IMR-90 (cell line): ENCODE measurements at regions of chr15 and their contacts with region 1.

Region 1: GRCh38 chr15:69523010-69524001 is 70.7 kb downstream of the RPLP1 start:
- DNase-seq: peak; percentile 72
- ATAC-seq: peak; percentile 98
- H3K4me3 ChIP-seq: no peak overlapping the region
- H3K27ac ChIP-seq: no peak overlapping the region
- H3K4me1 ChIP-seq: no peaks in the 10 kb centered on the region
- H3K27me3 ChIP-seq: peaks cover 25% of the 10 kb centered on the region
- CTCF ChIP-seq: peak; percentile 83
- POLR2A ChIP-seq: no peak
- RAD21 ChIP-seq: peak; percentile 90

Region 2: DNA sequence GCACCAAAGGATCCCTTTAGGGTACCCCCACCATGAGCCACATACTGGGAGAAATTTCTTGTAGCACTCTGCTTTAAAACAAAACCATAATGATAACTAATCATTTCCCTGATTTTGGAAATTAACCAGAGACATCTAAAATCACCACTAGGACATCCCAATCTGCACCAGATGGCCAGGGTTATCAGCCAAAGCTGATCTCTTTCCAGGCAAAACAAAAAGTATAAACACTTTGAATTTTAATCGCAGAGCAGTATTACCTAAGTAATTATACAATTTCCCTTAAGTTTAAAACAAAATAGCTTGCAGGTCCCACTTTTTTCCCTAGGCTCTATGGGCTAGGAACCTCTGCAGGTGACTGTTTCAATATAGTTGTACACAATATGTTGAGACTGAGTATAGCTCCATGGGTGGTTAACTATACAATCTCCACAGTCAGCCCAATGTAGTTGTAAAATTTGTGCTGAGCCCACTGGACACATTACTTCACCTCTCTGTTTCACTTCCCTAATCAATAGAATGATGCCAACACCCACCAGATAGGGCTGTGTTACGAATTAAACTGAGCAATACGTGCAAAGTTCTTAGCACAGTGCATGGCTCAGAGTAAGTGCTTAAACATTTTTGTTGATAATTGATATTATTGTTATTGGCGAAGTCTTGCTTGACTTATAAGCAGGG is 509.4 kb before region 1 on chr15:
- CTCF ChIA-PET with region 1: no interaction called
- POLR2A ChIA-PET with region 1: no interaction called
- dilution Hi-C with region 1: no loop called
- in situ Hi-C with region 1: no loop called
- intact Hi-C with region 1: no loop called
- DNase-seq: no peak
- ATAC-seq: no peak
- H3K4me3 ChIP-seq: no peak overlapping the region
- H3K27ac ChIP-seq: no peak overlapping the region
- H3K4me1 ChIP-seq: peaks cover 5% of the 10 kb centered on the region
- H3K27me3 ChIP-seq: peaks cover 4% of the 10 kb centered on the region; the same call in 1 of the 2 replicates
- CTCF ChIP-seq: no peak
- POLR2A ChIP-seq: no peak
- RAD21 ChIP-seq: no peak

Region 3: DNA sequence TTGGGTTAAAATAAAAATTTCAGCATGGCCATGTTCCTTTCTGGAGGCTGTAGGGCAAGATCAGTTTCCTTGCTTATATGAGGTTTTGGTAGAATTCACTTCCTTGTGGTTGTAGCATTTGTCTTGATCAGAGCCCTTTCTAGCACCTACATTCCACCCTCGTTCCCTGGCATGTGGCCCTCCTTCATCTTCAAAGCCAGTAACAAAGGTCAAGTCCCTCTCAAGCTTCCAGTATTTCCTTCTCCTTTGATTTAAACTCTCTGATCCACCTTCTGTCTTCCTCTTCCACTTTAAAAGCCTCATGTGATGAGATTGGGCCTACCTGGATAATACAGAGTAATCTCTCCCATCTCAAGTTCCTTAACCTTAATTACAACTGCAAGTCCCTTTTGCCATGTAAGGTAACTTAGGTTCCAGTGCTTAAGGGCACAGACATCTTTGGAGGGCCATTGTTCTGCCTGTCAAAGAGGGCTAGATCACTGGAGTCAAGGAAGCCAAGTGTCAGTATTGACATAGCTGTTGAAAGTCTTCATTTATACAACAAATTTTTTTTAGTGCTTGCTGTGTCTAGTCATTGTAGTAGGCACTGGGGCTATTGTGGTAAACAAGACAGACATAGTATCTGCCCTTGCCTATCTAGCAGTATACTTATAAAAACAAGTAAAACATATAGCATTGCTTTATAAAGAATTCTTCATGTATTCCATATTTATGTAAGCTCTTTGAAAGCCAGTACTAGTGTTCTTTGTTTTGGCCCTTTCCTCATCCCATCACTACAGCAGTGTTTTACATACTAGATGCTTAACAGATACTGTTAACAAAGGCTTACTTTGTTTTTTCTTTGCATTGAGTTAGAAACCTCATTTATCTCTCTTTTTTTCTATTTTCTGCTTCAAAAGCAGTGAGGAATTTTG is 322.2 kb before region 1 on chr15:
- CTCF ChIA-PET with region 1: no interaction called
- POLR2A ChIA-PET with region 1: no interaction called
- dilution Hi-C with region 1: no loop called
- in situ Hi-C with region 1: no loop called
- intact Hi-C with region 1: no loop called
- DNase-seq: no peak
- ATAC-seq: no peak
- H3K4me3 ChIP-seq: no peak overlapping the region
- H3K27ac ChIP-seq: no peak overlapping the region
- H3K4me1 ChIP-seq: no peaks in the 10 kb centered on the region
- H3K27me3 ChIP-seq: no peaks in the 10 kb centered on the region
- CTCF ChIP-seq: no peak
- POLR2A ChIP-seq: no peak
- RAD21 ChIP-seq: no peak

Region 4: GRCh38 chr15:69489073-69489571 is 34.2 kb before region 1 on chr15:
- CTCF ChIA-PET with region 1: no interaction called
- POLR2A ChIA-PET with region 1: no interaction called
- dilution Hi-C with region 1: no loop called
- in situ Hi-C with region 1: no loop called
- intact Hi-C with region 1: no loop called
- DNase-seq: no peak
- ATAC-seq: no peak
- H3K4me3 ChIP-seq: no peak overlapping the region
- H3K27ac ChIP-seq: no peak overlapping the region
- H3K4me1 ChIP-seq: no peaks in the 10 kb centered on the region
- H3K27me3 ChIP-seq: peaks cover 55% of the 10 kb centered on the region
- CTCF ChIP-seq: no peak
- POLR2A ChIP-seq: no peak
- RAD21 ChIP-seq: no peak

Region 5: DNA sequence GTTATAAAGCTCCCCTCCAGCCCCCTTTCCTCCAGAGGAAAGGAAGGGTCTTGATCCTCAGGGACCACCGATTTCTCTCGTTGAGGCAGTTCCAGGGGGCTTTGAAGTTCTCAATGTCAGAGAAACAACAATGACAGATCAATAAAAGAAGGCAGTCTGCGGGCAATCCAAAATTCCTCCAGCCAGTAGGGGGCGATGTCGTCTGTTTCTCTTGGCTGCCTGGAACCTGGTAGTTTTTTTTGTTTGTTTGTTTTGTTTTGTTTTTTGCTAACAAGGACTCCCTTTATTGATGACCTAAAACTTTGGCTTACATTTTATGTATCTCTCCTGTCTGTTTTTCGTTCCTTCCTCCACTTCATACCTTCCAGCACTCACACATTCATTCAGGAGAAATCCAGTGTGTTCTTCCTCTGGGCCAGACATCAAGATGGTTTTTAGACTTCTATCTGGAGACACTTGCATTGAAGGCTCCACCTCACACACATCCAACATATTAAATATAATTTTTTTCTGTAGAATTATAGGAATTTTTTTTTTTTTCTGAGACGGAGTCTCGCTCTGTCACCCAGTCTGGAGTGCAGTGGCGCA is 205.9 kb after region 1 on chr15:
- CTCF ChIA-PET with region 1: no interaction called
- POLR2A ChIA-PET with region 1: no interaction called
- dilution Hi-C with region 1: no loop called
- in situ Hi-C with region 1: no loop called
- intact Hi-C with region 1: loop called (anchors 2 kb)
- DNase-seq: peak; percentile 8
- ATAC-seq: no peak
- H3K4me3 ChIP-seq: no peak overlapping the region
- H3K27ac ChIP-seq: no peak overlapping the region
- H3K4me1 ChIP-seq: no peaks in the 10 kb centered on the region
- H3K27me3 ChIP-seq: peaks cover 56% of the 10 kb centered on the region
- CTCF ChIP-seq: peak; percentile 73
- POLR2A ChIP-seq: no peak
- RAD21 ChIP-seq: peak; percentile 79

Region 6: GRCh38 chr15:69807755-69808154 is 284.4 kb after region 1 on chr15:
- CTCF ChIA-PET with region 1: no interaction called
- POLR2A ChIA-PET with region 1: no interaction called
- dilution Hi-C with region 1: no loop called
- in situ Hi-C with region 1: no loop called
- intact Hi-C with region 1: loop called (anchors 5 kb)
- DNase-seq: peak; percentile 54
- ATAC-seq: peak; percentile 78
- H3K4me3 ChIP-seq: no peak overlapping the region
- H3K27ac ChIP-seq: no peak overlapping the region
- H3K4me1 ChIP-seq: peaks cover 4% of the 10 kb centered on the region
- H3K27me3 ChIP-seq: peaks cover 17% of the 10 kb centered on the region
- CTCF ChIP-seq: no peak
- POLR2A ChIP-seq: no peak
- RAD21 ChIP-seq: no peak